ENCODE measurements at regions of chr13 and their contacts with region 1.

Region 1: GRCh38 chr13:26280295-26280694 is 26.4 kb downstream of the CDK8 start:
- DNase-seq: no peak
- H3K4me3 ChIP-seq: no peak overlapping the region
- H3K27ac ChIP-seq: no peak overlapping the region
- H3K4me1 ChIP-seq: no peaks in the 10 kb centered on the region
- H3K27me3 ChIP-seq: no peaks in the 10 kb centered on the region
- CTCF ChIP-seq: no peak

Region 2: GRCh38 chr13:26362261-26362660 is 82.0 kb after region 1 on chr13:
- CTCF ChIA-PET with region 1: interaction called, 12 read pairs
- POLR2A ChIA-PET with region 1: no interaction called
- intact Hi-C with region 1: no loop called
- DNase-seq: no peak
- H3K4me3 ChIP-seq: no peak overlapping the region
- H3K27ac ChIP-seq: no peak overlapping the region
- H3K4me1 ChIP-seq: no peaks in the 10 kb centered on the region
- H3K27me3 ChIP-seq: no peaks in the 10 kb centered on the region
- CTCF ChIP-seq: no peak

Region 3: DNA sequence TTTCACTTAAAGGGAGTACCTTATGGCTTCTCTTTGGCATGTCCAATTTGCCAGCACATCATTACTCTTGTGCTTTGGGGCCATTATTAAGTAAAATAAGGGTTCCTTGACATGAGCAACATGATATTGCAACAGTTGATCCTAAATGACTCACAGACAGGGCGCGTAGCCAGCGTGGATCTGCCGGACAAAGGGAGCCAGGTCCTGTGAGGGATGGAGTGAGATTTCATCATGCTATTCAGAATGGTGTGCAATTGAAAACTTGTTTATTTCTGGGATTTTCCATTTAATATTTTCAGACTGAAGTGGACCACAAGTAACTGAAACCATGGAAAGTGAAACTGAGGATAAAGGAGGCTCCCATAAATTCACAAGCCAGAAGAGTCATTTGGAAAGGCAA is 228.6 kb after region 1 on chr13:
- CTCF ChIA-PET with region 1: no interaction called
- POLR2A ChIA-PET with region 1: interaction called, 11 read pairs
- intact Hi-C with region 1: no loop called
- DNase-seq: no peak
- H3K4me3 ChIP-seq: no peak overlapping the region
- H3K27ac ChIP-seq: no peak overlapping the region
- H3K4me1 ChIP-seq: no peaks in the 10 kb centered on the region
- H3K27me3 ChIP-seq: no peaks in the 10 kb centered on the region
- CTCF ChIP-seq: no peak

Measured in A673 (cell line).